IMR-90 (cell line): ENCODE measurements at regions of chr2 and their contacts with region 1.

Region 1: DNA sequence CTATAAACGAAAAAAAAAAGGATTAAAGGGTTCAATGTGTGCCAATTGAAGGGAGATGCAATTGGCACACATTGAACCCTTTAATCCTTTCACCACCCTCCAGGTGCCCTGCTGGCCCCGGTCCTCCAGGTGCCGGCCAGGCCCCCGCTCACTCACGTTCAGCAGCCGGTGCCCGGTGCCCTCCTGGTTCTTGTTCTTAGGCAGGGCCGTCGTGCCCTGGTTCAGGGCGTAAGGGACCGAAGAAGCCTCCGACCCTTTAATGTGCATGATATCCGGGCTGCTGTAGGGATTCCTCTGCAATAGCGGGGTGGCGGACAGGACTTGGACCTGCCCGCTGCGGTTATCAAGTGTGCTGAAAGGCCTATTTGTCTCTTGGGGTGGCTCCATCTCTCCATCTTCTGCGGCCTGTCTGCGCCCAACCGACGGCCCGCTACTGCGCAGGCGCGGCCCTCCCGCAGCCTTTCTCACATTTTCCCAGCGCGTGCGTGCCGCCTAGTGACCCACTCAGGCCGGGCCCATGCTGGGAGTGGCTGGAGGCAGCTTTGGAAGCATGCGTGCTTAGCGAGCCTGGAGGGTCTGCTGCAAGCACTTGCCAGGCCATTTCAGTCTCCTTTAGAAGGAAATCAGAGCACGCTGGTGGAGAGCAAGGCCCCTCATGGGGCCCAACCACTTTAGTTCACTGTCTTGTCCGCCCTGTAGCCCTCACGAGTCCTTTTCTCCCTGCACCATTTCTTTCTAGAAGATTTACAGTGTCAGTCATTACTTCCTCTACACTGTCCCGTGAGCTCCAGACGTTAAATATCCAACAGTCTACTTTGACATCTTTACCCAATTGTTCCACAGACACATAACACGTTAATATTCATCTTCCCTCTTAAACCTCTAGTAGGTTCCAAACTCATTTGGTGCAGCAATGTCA is 24.3 kb downstream of the TMEM237 start:
- DNase-seq: peak; percentile 50
- ATAC-seq: peak; percentile 96
- H3K4me3 ChIP-seq: no peak overlapping the region
- H3K27ac ChIP-seq: no peak overlapping the region
- H3K4me1 ChIP-seq: no peaks in the 10 kb centered on the region
- H3K27me3 ChIP-seq: no peaks in the 10 kb centered on the region
- CTCF ChIP-seq: peak; percentile 42
- POLR2A ChIP-seq: no peak
- RAD21 ChIP-seq: peak; percentile 56

Region 2: GRCh38 chr2:201572846-201573508 is 46.0 kb before region 1 on chr2:
- CTCF ChIA-PET with region 1: no interaction called
- POLR2A ChIA-PET with region 1: no interaction called
- dilution Hi-C with region 1: no loop called
- in situ Hi-C with region 1: no loop called
- intact Hi-C with region 1: no loop called
- DNase-seq: no peak
- ATAC-seq: no peak
- H3K4me3 ChIP-seq: no peak overlapping the region
- H3K27ac ChIP-seq: no peak overlapping the region
- H3K4me1 ChIP-seq: no peaks in the 10 kb centered on the region
- H3K27me3 ChIP-seq: no peaks in the 10 kb centered on the region
- CTCF ChIP-seq: no peak
- POLR2A ChIP-seq: no peak
- RAD21 ChIP-seq: no peak

Region 3: DNA sequence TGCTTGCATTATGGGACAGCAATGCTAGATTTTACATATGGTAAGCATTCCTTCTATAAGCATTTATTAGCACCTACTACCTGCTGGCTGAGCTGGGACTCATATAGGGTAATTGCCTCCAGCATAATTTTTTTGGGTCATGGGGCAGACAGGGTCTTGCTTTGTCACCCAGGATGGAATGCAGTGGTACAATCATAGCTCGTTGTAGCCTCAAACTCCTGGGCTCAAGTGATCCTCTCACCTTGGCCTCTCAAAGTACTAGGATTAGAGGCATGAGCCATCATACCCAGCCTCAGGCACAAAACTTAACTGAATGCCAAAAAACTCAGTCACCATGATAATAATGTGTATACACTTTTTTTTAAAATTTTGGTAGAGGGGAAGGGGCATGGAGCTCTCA is 11.0 kb before region 1 on chr2:
- CTCF ChIA-PET with region 1: no interaction called
- POLR2A ChIA-PET with region 1: interaction called, 11 read pairs
- dilution Hi-C with region 1: no loop called
- in situ Hi-C with region 1: no loop called
- intact Hi-C with region 1: no loop called
- DNase-seq: no peak
- ATAC-seq: no peak
- H3K4me3 ChIP-seq: no peak overlapping the region
- H3K27ac ChIP-seq: no peak overlapping the region
- H3K4me1 ChIP-seq: no peaks in the 10 kb centered on the region
- H3K27me3 ChIP-seq: no peaks in the 10 kb centered on the region
- CTCF ChIP-seq: no peak
- POLR2A ChIP-seq: no peak
- RAD21 ChIP-seq: no peak